GM12878 (cell line): ENCODE measurements at regions of chr5 and their contacts with region 1.

Region 1: DNA sequence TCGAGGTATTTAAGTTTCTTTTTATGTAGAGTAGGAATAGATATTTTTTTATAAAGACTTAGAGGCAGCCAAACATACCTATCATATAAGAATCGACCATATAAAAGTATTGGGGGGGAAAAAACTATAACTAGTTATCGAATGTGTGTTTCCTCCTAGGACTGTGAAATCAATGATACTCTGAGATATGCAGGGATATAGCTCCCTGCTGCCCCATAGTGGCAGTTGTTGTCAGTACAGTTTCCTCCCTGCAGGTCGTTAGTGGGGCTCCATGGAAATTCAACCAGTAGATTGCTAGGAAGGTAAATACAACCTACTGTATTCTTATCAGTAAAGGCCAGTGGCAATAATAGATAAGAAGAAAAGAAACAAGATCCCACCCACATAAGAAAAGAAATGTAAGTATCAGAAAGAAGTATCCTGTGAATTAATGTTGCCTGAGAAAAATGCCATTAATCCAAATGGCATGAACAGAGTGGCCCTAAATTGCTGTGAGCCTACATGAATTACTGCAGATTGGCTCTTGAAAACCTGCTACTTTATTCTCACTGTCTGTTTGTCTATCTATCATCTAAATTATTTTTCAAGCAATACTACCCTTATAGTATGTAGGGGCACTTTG is 136.9 kb upstream of the FBN2 start:
- DNase-seq: no peak
- ATAC-seq: peak; percentile 92
- H3K4me3 ChIP-seq: no peak overlapping the region
- H3K27ac ChIP-seq: no peak overlapping the region
- H3K4me1 ChIP-seq: no peaks in the 10 kb centered on the region
- H3K27me3 ChIP-seq: no peaks in the 10 kb centered on the region
- CTCF ChIP-seq: peak; percentile 60 to 68 (median 63)
- EP300 ChIP-seq: no peak
- POLR2A ChIP-seq: no peak
- RAD21 ChIP-seq: peak; percentile 53

Region 2: GRCh38 chr5:128684959-128685358 is 10.0 kb after region 1 on chr5:
- CTCF ChIA-PET with region 1: interaction called, 11 read pairs
- POLR2A ChIA-PET with region 1: no interaction called
- RAD21 ChIA-PET with region 1: interaction called, 3 read pairs
- SMC1A ChIA-PET with region 1: interaction called, 7 read pairs
- in situ Hi-C with region 1: no loop called
- intact Hi-C with region 1: no loop called
- DNase-seq: no peak
- ATAC-seq: no peak
- H3K4me3 ChIP-seq: no peak overlapping the region
- H3K27ac ChIP-seq: no peak overlapping the region
- H3K4me1 ChIP-seq: no peaks in the 10 kb centered on the region
- H3K27me3 ChIP-seq: no peaks in the 10 kb centered on the region
- CTCF ChIP-seq: no peak
- EP300 ChIP-seq: no peak
- POLR2A ChIP-seq: no peak
- RAD21 ChIP-seq: no peak